Activated CD4-positive, alpha-beta T cell treated with anti-CD3 and anti-CD28 coated beads for 36 hours (primary cell): ENCODE measurements at regions of chr19 and their contacts with region 1.

Region 1: GRCh38 chr19:7355151-7355820 is 6.5 kb downstream of the ARHGEF18 start:
- DNase-seq: peak; percentile 7
- ATAC-seq: no peak
- H3K4me3 Mint-ChIP-seq: no peak overlapping the region
- H3K27ac Mint-ChIP-seq: peak overlapping the region; percentile 90
- H3K4me1 Mint-ChIP-seq: peaks cover 63% of the 10 kb centered on the region
- H3K27me3 Mint-ChIP-seq: no peaks in the 10 kb centered on the region

Region 2: DNA sequence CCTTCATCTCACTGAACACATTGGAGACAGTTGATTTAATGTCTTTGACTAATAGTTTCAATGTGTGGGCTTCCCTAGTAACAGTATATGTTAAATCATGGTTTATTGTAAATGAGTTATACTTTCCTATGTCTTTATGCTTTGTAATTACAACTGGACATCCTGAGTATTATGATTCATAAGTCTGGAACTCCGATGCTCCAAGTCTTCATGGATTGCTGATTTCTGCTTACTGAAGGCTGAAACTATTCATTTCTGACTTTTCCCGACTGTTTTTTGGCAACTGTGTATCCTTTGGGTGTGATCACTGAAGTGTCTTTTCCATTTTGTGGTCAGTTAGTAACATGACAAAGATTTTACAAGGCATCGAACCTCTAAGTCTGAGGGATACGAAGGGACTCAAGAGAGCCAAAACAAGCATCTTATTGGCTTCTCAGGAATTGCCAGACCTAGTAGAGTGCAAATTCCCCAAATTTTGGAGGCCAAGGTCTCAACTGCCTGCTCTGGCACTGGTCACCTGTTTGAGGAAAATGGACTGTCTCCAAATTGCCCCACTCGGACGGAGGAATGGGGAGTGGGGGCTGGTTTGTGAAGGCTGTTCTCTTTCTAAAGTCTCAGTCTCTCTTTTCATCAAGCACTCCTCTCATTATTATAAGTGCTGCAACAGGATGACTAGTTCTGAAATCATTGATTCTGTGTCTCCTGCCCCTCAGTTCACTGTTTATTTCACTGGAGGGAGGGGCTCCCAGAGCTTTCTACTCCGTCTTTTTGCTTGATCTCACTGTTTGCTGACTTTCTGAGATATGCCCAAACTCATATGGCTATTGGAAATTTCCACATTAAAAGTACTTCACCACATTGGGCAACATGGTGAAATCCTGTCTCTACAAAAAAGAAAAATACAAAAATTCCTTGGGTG is 744.1 kb before region 1 on chr19:
- CTCF ChIA-PET with region 1: no interaction called
- POLR2A ChIA-PET with region 1: no interaction called
- intact Hi-C with region 1: no loop called
- DNase-seq: no peak
- ATAC-seq: peak; percentile 27
- H3K4me3 Mint-ChIP-seq: no peak overlapping the region
- H3K27ac Mint-ChIP-seq: no peak overlapping the region
- H3K4me1 Mint-ChIP-seq: peaks cover 25% of the 10 kb centered on the region
- H3K27me3 Mint-ChIP-seq: peaks cover 27% of the 10 kb centered on the region

Region 3: DNA sequence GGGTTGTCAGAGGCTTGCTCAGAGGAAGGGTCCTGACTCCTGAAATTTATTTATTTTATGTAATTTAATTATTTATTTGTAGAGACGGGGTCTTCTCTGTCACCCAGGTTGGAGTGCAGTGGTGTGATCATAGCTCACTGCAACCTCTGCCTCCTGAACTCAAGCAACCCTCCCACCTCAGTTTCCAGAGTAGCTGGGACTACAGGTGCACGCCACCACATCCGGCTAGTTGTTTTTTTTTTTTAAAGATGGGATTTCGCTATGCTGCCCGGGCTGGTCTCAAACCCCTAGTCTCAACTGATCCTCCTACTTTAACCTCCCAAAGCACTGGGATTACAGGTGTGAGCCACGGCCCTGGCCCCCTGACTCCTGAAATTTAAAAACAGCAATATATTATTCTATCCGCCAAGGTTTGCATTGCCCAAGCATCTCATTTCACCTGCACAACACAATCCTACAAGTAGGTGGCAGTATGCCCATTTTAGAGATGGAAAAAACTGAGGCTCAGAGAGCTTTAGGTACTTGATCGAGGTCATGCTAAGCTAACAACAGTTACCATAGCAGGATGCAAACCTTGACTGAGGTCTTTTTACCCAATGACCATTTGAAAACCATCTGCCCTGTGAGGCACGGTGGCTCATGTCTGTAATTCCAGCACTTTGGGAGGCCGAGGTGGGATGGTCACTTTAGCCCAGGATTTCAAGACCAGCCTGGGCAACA is 11.6 kb after region 1 on chr19:
- CTCF ChIA-PET with region 1: interaction called, 18 read pairs
- POLR2A ChIA-PET with region 1: no interaction called
- intact Hi-C with region 1: no loop called
- DNase-seq: peak; percentile 45
- ATAC-seq: peak; percentile 89
- H3K4me3 Mint-ChIP-seq: no peak overlapping the region
- H3K27ac Mint-ChIP-seq: peak overlapping the region; percentile 42
- H3K4me1 Mint-ChIP-seq: peaks cover 28% of the 10 kb centered on the region
- H3K27me3 Mint-ChIP-seq: no peaks in the 10 kb centered on the region

Region 4: DNA sequence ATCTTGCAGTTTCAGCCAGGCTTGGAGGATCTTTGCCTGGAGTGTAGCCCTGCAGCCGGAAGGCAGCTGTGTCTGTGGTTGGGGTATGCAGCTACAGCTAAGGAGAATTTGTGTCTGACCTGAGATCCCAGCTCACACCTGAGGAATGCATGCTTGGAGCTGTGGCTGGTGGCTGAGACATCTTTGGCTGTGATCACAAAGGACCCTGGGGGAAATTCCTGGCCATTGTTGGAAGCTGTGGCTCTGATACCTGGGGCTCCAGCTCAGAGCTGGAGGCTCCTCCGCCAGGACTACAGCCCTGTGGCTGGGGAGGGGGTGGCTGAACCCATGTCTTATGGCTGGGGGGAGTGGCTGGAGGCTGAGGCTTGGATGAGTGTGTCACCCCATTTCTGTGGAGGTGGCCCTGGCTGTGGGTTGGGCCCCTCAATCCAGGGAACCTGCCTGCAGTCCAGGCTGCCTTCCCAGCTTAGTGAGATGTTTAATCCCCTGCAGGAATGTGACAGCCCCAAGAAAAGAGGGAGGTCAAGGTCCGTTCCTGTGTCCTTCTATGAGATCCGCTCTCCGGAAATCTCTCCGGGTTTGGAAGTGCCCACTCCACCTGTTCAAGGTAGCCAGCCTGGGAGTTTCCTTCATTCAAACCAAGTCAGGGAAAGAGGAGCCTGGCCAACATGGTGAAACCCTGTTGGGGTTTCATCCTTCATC is 21.0 kb after region 1 on chr19:
- CTCF ChIA-PET with region 1: interaction called, 18 read pairs
- POLR2A ChIA-PET with region 1: no interaction called
- intact Hi-C with region 1: loop called (anchors 1 kb)
- DNase-seq: no peak
- ATAC-seq: no peak
- H3K4me3 Mint-ChIP-seq: no peak overlapping the region
- H3K27ac Mint-ChIP-seq: no peak overlapping the region
- H3K4me1 Mint-ChIP-seq: no peaks in the 10 kb centered on the region
- H3K27me3 Mint-ChIP-seq: no peaks in the 10 kb centered on the region

Region 5: DNA sequence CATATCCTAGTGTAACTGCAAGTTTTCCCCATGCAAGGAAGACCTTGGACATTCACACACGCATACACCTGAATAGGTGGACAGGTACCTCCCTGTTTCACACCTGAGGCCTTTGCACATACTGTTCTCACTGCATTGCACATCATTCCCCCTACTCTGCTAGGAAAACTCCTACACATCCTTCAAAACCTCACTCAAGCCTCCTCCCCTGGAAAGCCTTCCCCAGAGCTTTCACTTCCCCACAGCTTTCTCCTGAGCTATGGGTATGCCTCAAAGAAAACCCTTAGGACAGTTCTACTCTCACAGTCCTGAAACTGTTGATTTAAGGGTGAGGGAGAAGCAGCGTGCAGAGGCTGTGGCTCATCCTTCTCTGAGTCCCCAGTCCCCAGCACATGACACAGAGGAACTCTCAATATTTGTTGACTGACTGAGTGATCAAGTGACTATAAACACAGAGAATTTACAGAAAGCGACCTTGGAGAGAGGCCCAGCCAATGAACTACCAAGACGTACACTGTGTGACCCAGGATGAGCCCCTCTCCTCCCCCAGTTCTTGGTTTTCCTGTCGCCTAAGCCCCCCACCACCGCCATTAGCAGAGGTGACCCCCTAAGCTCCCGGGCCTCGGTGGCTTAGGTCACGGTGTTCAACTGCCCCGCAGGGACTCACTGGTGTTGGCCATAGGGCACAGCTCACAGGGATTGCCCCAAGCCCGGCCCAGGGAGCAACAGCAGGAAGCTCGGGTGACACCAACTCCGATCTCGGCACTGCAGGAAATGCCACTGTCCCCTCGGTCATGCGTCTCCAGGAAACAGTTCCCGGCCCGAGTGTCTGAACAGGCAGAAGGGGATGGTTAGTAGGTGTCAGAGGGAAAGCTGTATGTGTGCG is 753.5 kb after region 1 on chr19:
- CTCF ChIA-PET with region 1: no interaction called
- POLR2A ChIA-PET with region 1: no interaction called
- intact Hi-C with region 1: no loop called
- DNase-seq: no peak
- ATAC-seq: no peak
- H3K4me3 Mint-ChIP-seq: no peak overlapping the region
- H3K27ac Mint-ChIP-seq: no peak overlapping the region
- H3K4me1 Mint-ChIP-seq: no peaks in the 10 kb centered on the region
- H3K27me3 Mint-ChIP-seq: peaks cover 12% of the 10 kb centered on the region